K562 (cell line): ENCODE measurements at regions of chr1 and their contacts with region 1.

Region 1: DNA sequence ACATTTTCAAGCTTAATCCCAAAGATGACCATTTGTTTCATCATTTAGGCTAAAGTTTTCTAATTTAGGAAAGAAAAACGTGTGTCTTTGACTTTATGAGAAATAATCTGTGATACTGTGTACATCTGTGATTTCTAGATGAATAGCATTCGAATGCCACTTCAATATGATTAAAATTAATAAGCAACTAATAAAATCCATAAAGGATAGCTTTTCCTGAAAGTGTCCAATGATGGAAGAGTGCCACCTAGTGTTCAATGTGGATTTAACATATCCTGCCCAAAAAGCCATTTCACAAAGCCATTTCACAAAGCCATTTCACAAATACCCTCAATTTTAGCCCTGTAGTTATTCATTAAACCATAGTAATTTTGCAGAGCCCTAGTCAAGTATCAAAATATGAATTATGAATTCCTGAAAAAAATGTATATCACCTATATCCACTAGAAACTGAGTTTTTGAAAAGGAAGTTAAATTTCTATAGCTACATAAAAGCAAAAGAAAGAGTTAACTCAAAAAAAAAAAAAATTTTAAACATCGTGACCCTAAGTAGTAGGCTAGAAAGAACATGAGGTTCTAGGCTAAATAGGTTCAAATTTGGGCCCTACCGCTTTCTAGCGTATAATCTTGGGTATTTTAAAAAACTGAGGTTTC is 19.1 kb downstream of the NME7 start:
- DNase-seq: peak in 3 of 4 experiments; percentile 27 to 76 (median 28)
- ATAC-seq: peak; percentile 74
- H3K4me3 ChIP-seq: no peak overlapping the region
- H3K27ac ChIP-seq: no peak overlapping the region
- H3K4me1 ChIP-seq: peaks cover 0 to 10% of the 10 kb centered on the region in 2 experiments; a peak in 3 of 5 replicates
- H3K27me3 ChIP-seq: no peaks in the 10 kb centered on the region
- CTCF ChIP-seq: peak; percentile 43 to 87 (median 68); a peak in 5 of 6 replicates
- EP300 ChIP-seq: no peak
- POLR2A ChIP-seq: no peak
- RAD21 ChIP-seq: peak; percentile 96 to 98

Region 2: DNA sequence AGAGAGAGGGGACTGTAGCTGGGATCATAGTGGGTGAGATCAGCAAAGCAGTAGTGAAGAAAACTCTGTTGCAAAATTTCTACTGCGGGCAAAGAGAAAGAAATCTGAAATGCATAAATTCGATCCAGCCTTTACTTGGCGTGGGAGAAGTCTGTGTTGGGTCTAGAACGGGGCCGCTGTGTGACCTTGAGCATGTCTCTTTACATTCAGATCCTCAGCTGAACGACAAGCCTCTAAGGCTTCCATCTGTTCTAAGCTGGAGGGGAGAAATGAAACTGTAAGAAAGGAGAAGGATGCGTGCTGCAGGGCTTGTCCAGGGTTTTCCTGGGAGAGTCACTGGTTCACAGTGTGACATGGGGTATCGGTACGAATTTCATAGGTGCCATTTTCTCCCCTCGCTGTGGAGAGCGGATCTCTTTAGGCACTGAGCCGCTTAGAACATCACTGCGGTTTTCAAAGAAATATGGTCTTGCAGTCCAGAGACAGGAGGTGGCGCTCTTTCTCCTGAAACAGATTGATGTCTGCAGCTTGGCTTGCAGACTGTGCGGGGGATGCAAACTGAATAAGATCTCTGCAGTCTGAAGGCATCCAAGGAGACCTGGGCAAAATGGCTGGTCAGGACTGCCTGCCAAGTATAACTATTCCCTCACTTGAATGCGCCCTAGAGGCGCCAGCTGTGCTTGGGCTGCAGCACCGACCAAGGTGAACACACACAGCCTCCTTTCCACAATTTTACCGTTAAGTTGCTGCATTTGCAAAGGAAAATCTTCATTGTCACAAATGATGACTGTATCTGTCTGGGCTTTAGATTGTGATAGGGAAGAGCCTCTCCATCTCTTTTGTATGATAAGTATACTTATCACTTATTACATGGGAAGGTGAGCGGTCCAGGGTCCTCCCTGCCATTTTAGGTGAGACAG is 908.8 kb before region 1 on chr1:
- CTCF ChIA-PET with region 1: interaction called, 6 read pairs
- POLR2A ChIA-PET with region 1: no interaction called
- in situ Hi-C with region 1: loop called (anchors 10 kb)
- intact Hi-C with region 1: loop called (anchors 5 kb)
- DNase-seq: peak; percentile 61 to 90 (median 69)
- ATAC-seq: peak; percentile 97
- H3K4me3 ChIP-seq: no peak overlapping the region
- H3K27ac ChIP-seq: no peak overlapping the region
- H3K4me1 ChIP-seq: no peaks in the 10 kb centered on the region; a peak in 1 of 5 replicates
- H3K27me3 ChIP-seq: peaks cover 1 to 32% of the 10 kb centered on the region in 2 experiments; a peak in 3 of 5 replicates
- CTCF ChIP-seq: peak; percentile 90 to 96 (median 94)
- EP300 ChIP-seq: no peak
- POLR2A ChIP-seq: no peak
- RAD21 ChIP-seq: peak; percentile 94 to 99

Region 3: GRCh38 chr1:168637350-168637991 is 711.0 kb before region 1 on chr1:
- CTCF ChIA-PET with region 1: interaction called, 4 read pairs
- POLR2A ChIA-PET with region 1: no interaction called
- in situ Hi-C with region 1: no loop called
- intact Hi-C with region 1: loop called (anchors 10 kb)
- DNase-seq: peak; percentile 51 to 72 (median 62)
- ATAC-seq: peak; percentile 95
- H3K4me3 ChIP-seq: no peak overlapping the region
- H3K27ac ChIP-seq: no peak overlapping the region
- H3K4me1 ChIP-seq: 0 out of 5 replicates have a peak, but pooled peaks cover 0 to 4% of the 10 kb centered on the region in 2 experiments
- H3K27me3 ChIP-seq: no peaks in the 10 kb centered on the region
- CTCF ChIP-seq: peak; percentile 58 to 87 (median 86)
- EP300 ChIP-seq: peak; percentile 4; the same call in 1 of the 2 replicates
- POLR2A ChIP-seq: no peak
- RAD21 ChIP-seq: peak; percentile 66 to 71

Region 4: GRCh38 chr1:169024800-169025271 is 323.7 kb before region 1 on chr1:
- CTCF ChIA-PET with region 1: no interaction called
- POLR2A ChIA-PET with region 1: no interaction called
- in situ Hi-C with region 1: loop called (anchors 10 kb)
- intact Hi-C with region 1: no loop called
- DNase-seq: no peak
- ATAC-seq: no peak
- H3K4me3 ChIP-seq: no peak overlapping the region
- H3K27ac ChIP-seq: no peak overlapping the region
- H3K4me1 ChIP-seq: peaks cover 0 to 5% of the 10 kb centered on the region in 2 experiments; a peak in 2 of 5 replicates
- H3K27me3 ChIP-seq: 0 out of 5 replicates have a peak, but pooled peaks cover 0 to 2% of the 10 kb centered on the region in 2 experiments
- CTCF ChIP-seq: no peak
- EP300 ChIP-seq: no peak
- POLR2A ChIP-seq: no peak
- RAD21 ChIP-seq: no peak

Region 5: GRCh38 chr1:169193191-169193850 is 155.2 kb before region 1 on chr1:
- CTCF ChIA-PET with region 1: no interaction called
- POLR2A ChIA-PET with region 1: no interaction called
- in situ Hi-C with region 1: no loop called
- intact Hi-C with region 1: loop called (anchors 5 kb)
- DNase-seq: peak; percentile 12 to 81 (median 42)
- ATAC-seq: peak; percentile 87
- H3K4me3 ChIP-seq: no peak overlapping the region
- H3K27ac ChIP-seq: no peak overlapping the region
- H3K4me1 ChIP-seq: peaks cover 0 to 3% of the 10 kb centered on the region in 2 experiments; a peak in 2 of 5 replicates
- H3K27me3 ChIP-seq: no peaks in the 10 kb centered on the region
- CTCF ChIP-seq: peak; percentile 27 to 71 (median 63); a peak in 4 of 6 replicates
- EP300 ChIP-seq: peak; percentile 77
- POLR2A ChIP-seq: no peak
- RAD21 ChIP-seq: peak; percentile 71 to 73

Region 6: GRCh38 chr1:170388489-170388888 is 1040.0 kb after region 1 on chr1:
- CTCF ChIA-PET with region 1: no interaction called
- POLR2A ChIA-PET with region 1: no interaction called
- in situ Hi-C with region 1: no loop called
- intact Hi-C with region 1: no loop called
- DNase-seq: no peak
- ATAC-seq: no peak
- H3K4me3 ChIP-seq: no peak overlapping the region
- H3K27ac ChIP-seq: no peak overlapping the region
- H3K4me1 ChIP-seq: no peaks in the 10 kb centered on the region
- H3K27me3 ChIP-seq: no peaks in the 10 kb centered on the region
- CTCF ChIP-seq: no peak
- EP300 ChIP-seq: no peak
- POLR2A ChIP-seq: no peak
- RAD21 ChIP-seq: no peak